ENCODE measurements at regions of chr4 and their contacts with region 1.

Region 1: GRCh38 chr4:41747230-41748055 is 1.1 kb downstream of the PHOX2B start:
- DNase-seq: peak; percentile 26
- CTCF ChIP-seq: no peak

Region 2: DNA sequence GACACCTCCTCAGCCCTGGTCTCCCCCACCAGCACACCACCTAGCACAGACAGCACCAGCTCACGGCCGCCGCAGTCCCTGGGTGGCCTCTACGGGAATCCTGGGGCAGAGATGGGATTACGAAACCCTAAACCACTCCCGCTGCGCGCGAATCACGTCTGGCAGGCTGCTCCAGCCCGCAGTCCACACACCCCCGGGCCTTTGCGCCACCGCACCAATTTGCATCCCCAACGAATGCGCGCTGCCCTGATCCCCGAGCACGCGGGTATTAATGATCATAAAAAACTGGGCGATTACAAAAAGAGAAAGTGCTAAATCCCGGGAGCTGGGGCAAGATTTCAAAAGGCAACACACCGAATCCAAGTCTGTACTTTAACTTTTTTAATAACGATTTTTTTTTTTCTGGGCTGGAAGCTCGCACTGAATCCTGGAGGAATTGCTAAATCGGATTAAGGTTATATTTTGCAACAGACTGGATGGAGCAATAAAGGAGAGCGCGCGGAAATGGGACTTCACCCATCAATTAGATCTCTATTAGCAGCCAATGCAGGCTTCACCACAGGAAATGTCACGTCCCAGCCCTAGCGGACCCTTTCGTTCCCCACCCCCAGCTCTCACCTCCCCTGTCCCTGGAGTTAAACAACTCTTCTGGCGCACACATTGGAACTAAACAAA is 118.0 kb after region 1 on chr4:
- in situ Hi-C with region 1: no loop called
- DNase-seq: no peak
- CTCF ChIP-seq: no peak

Region 3: DNA sequence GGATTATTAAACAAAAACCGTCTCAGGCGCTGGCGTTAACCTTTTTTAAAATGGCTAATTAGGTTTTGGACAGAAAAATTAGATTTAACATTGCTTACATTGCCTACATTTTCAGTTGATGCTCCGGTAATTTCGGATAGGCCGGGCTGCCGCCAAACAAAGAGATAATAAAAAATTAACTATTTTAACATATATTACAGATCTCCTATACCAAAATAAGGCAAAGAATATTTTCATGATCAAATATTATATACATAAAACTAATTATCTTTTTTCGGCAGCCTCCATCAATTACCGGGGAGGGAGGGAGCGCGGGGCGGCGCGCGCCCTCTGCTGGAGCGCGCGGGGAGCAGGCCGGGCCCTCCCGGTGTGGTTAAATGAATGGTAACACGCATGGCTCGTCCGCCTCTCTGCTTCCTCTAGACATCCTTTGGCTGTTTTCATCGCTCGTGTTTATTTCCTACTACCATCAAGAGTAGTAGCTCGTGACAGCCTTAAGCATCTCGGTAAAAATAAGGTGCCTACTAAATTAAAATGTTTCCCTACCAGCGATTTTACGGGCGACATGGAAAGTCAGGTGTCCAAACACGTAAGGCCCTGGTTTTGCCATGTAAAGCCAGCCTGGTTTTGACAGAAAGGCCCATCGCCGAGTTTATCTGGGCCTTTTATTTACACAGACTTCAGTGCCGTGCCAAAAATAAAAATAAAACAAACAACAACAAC is 135.3 kb after region 1 on chr4:
- in situ Hi-C with region 1: loop called (anchors 10 kb)
- DNase-seq: peak; percentile 86
- CTCF ChIP-seq: peak; percentile 86